CD4-positive, alpha-beta memory T cell (primary cell): ENCODE measurements at regions of chr19 and their contacts with region 1.

Region 1: DNA sequence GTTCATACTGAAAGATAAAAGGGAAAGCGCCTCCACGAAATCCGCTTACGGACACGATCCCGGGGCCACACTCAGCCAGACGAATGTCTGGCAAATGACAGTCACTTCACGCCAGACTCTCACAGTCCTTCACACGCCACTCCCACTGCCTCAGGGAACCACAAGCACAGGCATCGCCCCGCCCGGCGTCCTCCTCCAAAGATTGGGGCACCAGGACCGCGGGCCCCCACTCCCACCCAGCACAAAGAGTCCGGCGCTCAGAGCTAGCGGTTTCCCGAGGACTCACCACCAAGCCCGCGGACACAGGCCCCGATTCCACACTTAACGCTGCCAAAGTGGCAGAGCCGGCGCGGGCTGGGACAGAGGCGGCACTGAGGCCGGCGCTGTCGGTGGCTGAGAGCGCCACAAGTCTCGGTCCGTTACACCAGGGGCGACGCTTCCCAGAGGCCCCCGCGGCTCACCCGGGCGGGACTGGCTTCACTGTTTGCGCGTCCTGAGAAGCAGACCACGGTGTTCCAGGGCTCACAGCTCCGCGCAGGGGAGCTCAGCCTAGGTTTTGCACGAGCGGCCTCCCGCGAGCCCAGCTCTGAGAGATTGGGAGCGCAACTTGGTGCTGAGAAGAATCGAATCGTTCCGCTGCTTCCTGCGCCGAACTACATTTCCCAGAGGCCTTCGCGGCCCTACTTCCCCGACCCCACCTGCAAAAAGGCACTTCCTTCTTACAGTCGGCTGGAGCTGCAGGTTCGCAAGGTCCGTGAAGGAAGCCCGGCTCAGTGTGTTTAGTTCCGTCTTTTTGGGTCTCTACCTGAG is at the start of gene ZNF569:
- DNase-seq: peak; percentile 91 to 96 (median 93)
- H3K4me3 ChIP-seq: peak within 1 kb of the TSS; percentile 63 to 83
- H3K4me3 Mint-ChIP-seq: peak within 1 kb of the TSS; percentile 95 to 99 (median 97)
- H3K27ac ChIP-seq: peak within 1 kb of the TSS; percentile 74
- H3K27ac Mint-ChIP-seq: peak within 1 kb of the TSS; percentile 95 to 99 (median 98)
- H3K4me1 ChIP-seq: peaks cover 31% of the 10 kb centered on the region
- H3K4me1 Mint-ChIP-seq: peaks cover 28 to 45% (median 35%) of the 10 kb centered on the region in 4 donors
- H3K27me3 ChIP-seq: no peaks in the 10 kb centered on the region
- H3K27me3 Mint-ChIP-seq: no peaks in the 10 kb centered on the region
- total RNA-seq, gene ZNF569: 13.5 to 14.9 TPM

Region 2: GRCh38 chr19:36772311-36773222 is 694.4 kb before region 1 on chr19 and contains the start of gene ZNF850:
- CTCF ChIA-PET with region 1: no interaction called
- POLR2A ChIA-PET with region 1: no interaction called
- intact Hi-C with region 1: loop called (anchors 5 kb)
- DNase-seq: peak; percentile 94 to 98 (median 95)
- H3K4me3 ChIP-seq: peak within 1 kb of the TSS; percentile 85 to 90
- H3K4me3 Mint-ChIP-seq: peak within 1 kb of the TSS; percentile 94 to 100 (median 98)
- H3K27ac ChIP-seq: peak within 1 kb of the TSS; percentile 81
- H3K27ac Mint-ChIP-seq: peak within 1 kb of the TSS; percentile 91 to 97 (median 95)
- H3K4me1 ChIP-seq: peaks cover 19% of the 10 kb centered on the region
- H3K4me1 Mint-ChIP-seq: peaks cover 18 to 27% (median 24%) of the 10 kb centered on the region in 4 donors
- H3K27me3 ChIP-seq: no peaks in the 10 kb centered on the region
- H3K27me3 Mint-ChIP-seq: peaks cover 0 to 2% of the 10 kb centered on the region in 2 donors
- total RNA-seq, gene ZNF850: 3.7 to 5.4 TPM

Region 3: DNA sequence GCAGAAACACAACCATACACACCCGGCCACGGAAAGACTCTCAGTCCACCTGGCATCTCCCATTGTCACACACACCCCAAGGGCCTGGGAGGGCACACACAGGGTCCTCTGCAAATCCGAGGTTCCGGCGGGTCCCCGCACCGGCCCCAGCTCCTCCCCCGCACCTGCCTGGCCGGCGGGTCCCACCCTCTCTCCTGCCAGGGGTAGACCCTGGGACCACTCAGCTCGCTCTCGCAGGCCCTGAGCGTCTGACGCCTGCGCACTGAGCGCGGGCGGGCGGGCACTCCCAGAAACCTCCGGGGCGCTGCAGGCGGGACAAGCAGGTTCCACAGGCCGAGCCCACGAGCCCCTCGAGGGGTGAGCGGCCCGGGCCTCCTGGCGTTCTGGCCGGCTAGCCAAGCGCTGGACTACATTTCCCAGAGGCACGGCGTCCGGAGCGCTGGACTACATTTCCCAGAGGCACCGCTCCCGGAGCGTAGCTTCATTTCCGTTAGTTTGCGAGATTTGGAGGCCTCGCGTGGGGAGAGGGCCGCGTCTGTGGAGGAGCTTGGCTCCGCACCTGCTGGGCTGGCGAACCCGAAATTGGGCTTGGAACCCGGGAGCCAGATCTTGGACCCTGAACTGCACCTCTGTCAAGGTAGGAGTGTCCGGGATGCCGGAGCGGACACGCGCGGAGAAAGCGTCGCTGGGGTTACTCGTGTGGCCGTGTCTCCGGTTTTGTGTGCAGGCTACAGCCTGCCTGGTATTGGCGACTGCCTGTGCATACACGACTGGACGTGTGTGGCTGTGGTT is 388.9 kb before region 1 on chr19 and contains the start of gene ZNF420:
- CTCF ChIA-PET with region 1: no interaction called
- POLR2A ChIA-PET with region 1: no interaction called
- intact Hi-C with region 1: loop called (anchors 1 kb)
- DNase-seq: peak; percentile 85 to 92 (median 87)
- H3K4me3 ChIP-seq: peak within 1 kb of the TSS; percentile 61 to 88
- H3K4me3 Mint-ChIP-seq: peak within 1 kb of the TSS; percentile 90 to 100 (median 98)
- H3K27ac ChIP-seq: peak within 1 kb of the TSS; percentile 73
- H3K27ac Mint-ChIP-seq: peak within 1 kb of the TSS; percentile 85 to 99 (median 95)
- H3K4me1 ChIP-seq: peaks cover 23% of the 10 kb centered on the region
- H3K4me1 Mint-ChIP-seq: peaks cover 22 to 43% (median 27%) of the 10 kb centered on the region in 4 donors
- H3K27me3 ChIP-seq: no peaks in the 10 kb centered on the region
- H3K27me3 Mint-ChIP-seq: no peaks in the 10 kb centered on the region
- total RNA-seq, gene ZNF420: 25.0 to 28.6 TPM

Region 4: GRCh38 chr19:37342753-37343152 is 124.2 kb before region 1 on chr19:
- CTCF ChIA-PET with region 1: no interaction called
- POLR2A ChIA-PET with region 1: no interaction called
- intact Hi-C with region 1: no loop called
- DNase-seq: no peak
- H3K4me3 ChIP-seq: no peak overlapping the region
- H3K4me3 Mint-ChIP-seq: no peak overlapping the region
- H3K27ac ChIP-seq: no peak overlapping the region
- H3K27ac Mint-ChIP-seq: no peak overlapping the region
- H3K4me1 ChIP-seq: no peaks in the 10 kb centered on the region
- H3K4me1 Mint-ChIP-seq: peaks cover 8 to 12% (median 9%) of the 10 kb centered on the region in 4 donors
- H3K27me3 ChIP-seq: no peaks in the 10 kb centered on the region
- H3K27me3 Mint-ChIP-seq: no peaks in the 10 kb centered on the region

Region 5: GRCh38 chr19:37370880-37371661 is 95.9 kb before region 1 on chr19 and contains the start of gene ZNF527:
- CTCF ChIA-PET with region 1: interaction called, 7 read pairs
- POLR2A ChIA-PET with region 1: interaction called, 33 read pairs
- intact Hi-C with region 1: loop called (anchors 1 kb)
- DNase-seq: peak; percentile 96 to 98 (median 97)
- H3K4me3 ChIP-seq: peak within 1 kb of the TSS; percentile 63 to 86
- H3K4me3 Mint-ChIP-seq: peak within 1 kb of the TSS; percentile 97 to 100 (median 98)
- H3K27ac ChIP-seq: peak within 1 kb of the TSS; percentile 78
- H3K27ac Mint-ChIP-seq: peak within 1 kb of the TSS; percentile 97 to 99 (median 98)
- H3K4me1 ChIP-seq: peaks cover 7% of the 10 kb centered on the region
- H3K4me1 Mint-ChIP-seq: peaks cover 9 to 28% (median 16%) of the 10 kb centered on the region in 4 donors
- H3K27me3 ChIP-seq: no peaks in the 10 kb centered on the region
- H3K27me3 Mint-ChIP-seq: no peaks in the 10 kb centered on the region
- total RNA-seq, gene ZNF527: 12.7 to 13.3 TPM

Region 6: DNA sequence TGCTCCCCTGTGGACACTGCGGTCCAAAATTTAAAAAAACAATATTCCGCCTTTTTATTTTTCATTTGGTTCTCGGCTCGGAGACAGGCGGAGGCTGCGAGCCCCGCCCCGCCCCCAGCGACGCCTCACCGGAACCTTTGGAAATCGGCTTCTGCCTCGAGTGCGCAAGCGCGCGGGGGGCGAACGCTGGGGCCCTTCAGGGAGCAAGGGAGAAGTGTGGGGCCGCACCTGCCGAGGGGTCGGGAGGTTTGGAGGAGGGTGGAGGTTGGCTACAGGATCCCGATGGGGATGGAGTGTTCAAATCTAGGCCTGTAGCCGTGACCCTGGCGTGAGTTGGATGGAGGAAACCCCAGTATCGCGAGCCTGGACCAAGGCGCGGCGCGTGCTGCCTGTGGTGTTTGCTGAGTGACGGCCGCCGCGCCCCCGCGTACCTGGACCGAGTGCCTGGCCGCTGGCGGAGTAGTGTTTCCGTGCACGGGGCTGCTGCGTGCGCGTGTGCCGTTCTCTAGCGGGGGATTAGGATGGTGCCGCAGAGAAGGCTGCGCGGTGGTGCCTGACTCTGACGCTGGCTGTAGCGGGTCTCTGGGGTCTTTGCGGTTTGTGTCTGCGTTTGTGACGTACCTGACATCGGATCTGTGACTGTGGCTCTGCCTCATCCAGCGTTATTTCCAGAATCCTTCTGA is 188.8 kb after region 1 on chr19:
- CTCF ChIA-PET with region 1: no interaction called
- POLR2A ChIA-PET with region 1: no interaction called
- intact Hi-C with region 1: loop called (anchors 1 kb)
- DNase-seq: peak; percentile 83 to 85 (median 85)
- H3K4me3 ChIP-seq: peak overlapping the region; percentile 73 to 78
- H3K4me3 Mint-ChIP-seq: peak overlapping the region; percentile 83 to 96 (median 95)
- H3K27ac ChIP-seq: peak overlapping the region; percentile 81
- H3K27ac Mint-ChIP-seq: peak overlapping the region; percentile 92 to 98 (median 95)
- H3K4me1 ChIP-seq: peaks cover 20% of the 10 kb centered on the region
- H3K4me1 Mint-ChIP-seq: peaks cover 18 to 40% (median 26%) of the 10 kb centered on the region in 4 donors
- H3K27me3 ChIP-seq: no peaks in the 10 kb centered on the region
- H3K27me3 Mint-ChIP-seq: no peaks in the 10 kb centered on the region